CD4-positive, alpha-beta memory T cell (primary cell): ENCODE measurements at regions of chr6 and their contacts with region 1.

Region 1: DNA sequence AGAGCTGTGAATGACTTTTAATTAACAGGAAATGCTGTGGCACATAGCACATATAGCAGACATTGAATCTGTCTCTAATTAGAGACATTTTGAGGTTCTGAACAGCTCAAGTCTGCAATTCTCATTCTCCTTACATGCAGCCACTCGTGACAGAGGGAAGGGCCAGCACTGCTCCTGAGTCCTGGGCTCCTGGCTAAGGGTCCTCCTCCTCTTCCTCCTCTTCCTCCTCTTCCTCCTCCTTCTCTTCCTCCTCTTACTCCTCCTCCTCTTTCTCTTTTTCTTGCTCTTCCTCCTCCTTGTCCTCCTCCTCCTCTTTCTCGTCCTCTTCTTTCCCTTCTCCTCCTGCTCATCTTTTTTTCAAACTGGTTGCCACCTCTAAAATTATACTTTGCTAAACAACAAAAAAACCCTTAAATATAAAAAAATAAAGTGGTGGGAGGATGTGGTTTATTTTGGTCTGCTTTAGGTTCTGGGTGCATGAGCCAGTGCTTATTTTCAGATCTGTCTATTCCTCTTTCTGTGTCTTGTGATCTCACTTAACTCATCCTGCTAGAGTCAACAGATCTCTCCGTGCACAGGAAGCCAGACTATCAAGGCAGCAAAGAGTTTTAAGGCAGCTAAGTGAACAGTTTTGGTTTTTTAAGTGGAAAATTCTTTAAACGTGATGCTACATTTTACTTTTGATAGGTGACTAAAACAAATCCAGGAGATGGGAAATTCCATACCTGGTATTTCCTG is 159.3 kb downstream of the CD83 start:
- DNase-seq: peak; percentile 63 to 80 (median 76)
- H3K4me3 ChIP-seq: peak overlapping the region; percentile 5 to 17
- H3K4me3 Mint-ChIP-seq: peak overlapping the region; percentile 61 to 88 (median 68)
- H3K27ac ChIP-seq: peak overlapping the region; percentile 35
- H3K27ac Mint-ChIP-seq: peak overlapping the region; percentile 80 to 98 (median 88)
- H3K4me1 ChIP-seq: peaks cover 40% of the 10 kb centered on the region
- H3K4me1 Mint-ChIP-seq: peaks cover 31 to 52% (median 36%) of the 10 kb centered on the region in 4 donors
- H3K27me3 ChIP-seq: no peaks in the 10 kb centered on the region
- H3K27me3 Mint-ChIP-seq: no peaks in the 10 kb centered on the region

Region 2: GRCh38 chr6:14316635-14317386 is 40.0 kb after region 1 on chr6:
- CTCF ChIA-PET with region 1: no interaction called
- POLR2A ChIA-PET with region 1: no interaction called
- intact Hi-C with region 1: loop called (anchors 2 kb)
- DNase-seq: no peak
- H3K4me3 ChIP-seq: no peak overlapping the region
- H3K4me3 Mint-ChIP-seq: no peak overlapping the region
- H3K27ac ChIP-seq: no peak overlapping the region
- H3K27ac Mint-ChIP-seq: peak overlapping the region in 1 of 7 donors; percentile 7
- H3K4me1 ChIP-seq: no peaks in the 10 kb centered on the region
- H3K4me1 Mint-ChIP-seq: peaks cover 0 to 5% (median 2%) of the 10 kb centered on the region in 4 donors
- H3K27me3 ChIP-seq: no peaks in the 10 kb centered on the region
- H3K27me3 Mint-ChIP-seq: peaks cover 0 to 1% of the 10 kb centered on the region in 2 donors

Region 3: GRCh38 chr6:14458669-14459266 is 181.9 kb after region 1 on chr6:
- CTCF ChIA-PET with region 1: no interaction called
- POLR2A ChIA-PET with region 1: interaction called, 3 read pairs
- intact Hi-C with region 1: loop called (anchors 5 kb)
- DNase-seq: no peak
- H3K4me3 ChIP-seq: no peak overlapping the region
- H3K4me3 Mint-ChIP-seq: no peak overlapping the region
- H3K27ac ChIP-seq: no peak overlapping the region
- H3K27ac Mint-ChIP-seq: no peak overlapping the region
- H3K4me1 ChIP-seq: peaks cover 16% of the 10 kb centered on the region
- H3K4me1 Mint-ChIP-seq: peaks cover 12 to 19% (median 15%) of the 10 kb centered on the region in 4 donors
- H3K27me3 ChIP-seq: no peaks in the 10 kb centered on the region
- H3K27me3 Mint-ChIP-seq: no peaks in the 10 kb centered on the region